B cell (primary cell): ENCODE measurements at regions of chr7 and their contacts with region 1.

Region 1: GRCh38 chr7:30322271-30323005 is 38.0 kb downstream of the ZNRF2 start:
- DNase-seq: peak; percentile 63
- ATAC-seq: peak; percentile 74
- H3K4me3 ChIP-seq: peak overlapping the region; percentile 11 to 51 (median 47)
- H3K4me3 Mint-ChIP-seq: peak overlapping the region; percentile 87
- H3K27ac ChIP-seq: peak overlapping the region; percentile 87 to 94
- H3K27ac Mint-ChIP-seq: peak overlapping the region; percentile 97
- H3K4me1 ChIP-seq: peaks cover 29 to 46% of the 10 kb centered on the region in 2 donors
- H3K4me1 Mint-ChIP-seq: peaks cover 79% of the 10 kb centered on the region
- H3K27me3 ChIP-seq: no peaks in the 10 kb centered on the region
- H3K27me3 Mint-ChIP-seq: no peaks in the 10 kb centered on the region
- CTCF ChIP-seq: no peak

Region 2: DNA sequence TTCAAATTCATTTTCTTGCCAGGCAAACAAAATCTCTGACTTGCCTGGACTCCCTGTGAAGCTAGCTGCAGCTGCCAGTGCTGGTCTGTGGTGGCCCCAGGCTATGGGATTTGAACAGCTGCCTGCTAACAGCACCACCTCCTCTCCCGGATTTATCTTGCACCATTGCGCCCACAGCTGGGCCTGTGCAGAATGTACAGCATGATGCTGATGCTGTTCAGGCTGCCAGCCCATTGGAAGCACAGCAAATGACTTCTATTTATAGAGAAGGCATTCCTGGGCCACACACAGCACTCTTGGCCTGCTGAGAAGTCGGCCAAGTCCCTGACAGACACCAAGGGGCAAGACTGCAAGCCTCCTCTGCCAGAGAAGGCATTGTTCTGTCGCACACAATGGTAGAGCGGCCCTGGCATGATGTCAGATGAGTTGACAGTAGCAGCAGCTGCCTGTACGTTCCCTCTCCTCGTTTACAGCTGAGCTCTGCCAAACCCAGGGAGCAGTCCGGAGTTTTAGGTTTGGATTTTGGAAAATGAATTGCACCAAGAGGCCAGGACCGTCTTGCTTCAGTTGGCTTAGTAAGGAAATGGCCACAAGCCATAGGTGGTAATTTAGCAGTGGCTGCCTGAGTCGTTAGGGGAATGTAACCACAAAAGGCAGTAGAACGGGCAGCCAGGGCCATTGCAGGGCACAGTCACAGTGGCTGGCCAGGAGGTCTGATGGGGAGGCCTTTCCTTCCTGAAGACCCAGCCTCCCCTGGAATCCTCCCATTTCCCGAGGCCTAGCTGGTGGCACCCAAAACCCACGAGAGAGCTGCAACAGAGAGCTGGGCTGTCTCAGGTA is 149.2 kb before region 1 on chr7:
- CTCF ChIA-PET with region 1: no interaction called
- POLR2A ChIA-PET with region 1: no interaction called
- intact Hi-C with region 1: no loop called
- DNase-seq: no peak
- ATAC-seq: no peak
- H3K4me3 ChIP-seq: no peak overlapping the region
- H3K4me3 Mint-ChIP-seq: no peak overlapping the region
- H3K27ac ChIP-seq: no peak overlapping the region
- H3K27ac Mint-ChIP-seq: no peak overlapping the region
- H3K4me1 ChIP-seq: peaks cover 17 to 22% of the 10 kb centered on the region in 2 donors
- H3K4me1 Mint-ChIP-seq: peaks cover 29% of the 10 kb centered on the region
- H3K27me3 ChIP-seq: no peaks in the 10 kb centered on the region
- H3K27me3 Mint-ChIP-seq: no peaks in the 10 kb centered on the region
- CTCF ChIP-seq: no peak

Region 3: GRCh38 chr7:30206491-30206890 is 115.9 kb before region 1 on chr7:
- CTCF ChIA-PET with region 1: no interaction called
- POLR2A ChIA-PET with region 1: no interaction called
- intact Hi-C with region 1: no loop called
- DNase-seq: no peak
- ATAC-seq: no peak
- H3K4me3 ChIP-seq: no peak overlapping the region
- H3K4me3 Mint-ChIP-seq: no peak overlapping the region
- H3K27ac ChIP-seq: no peak overlapping the region
- H3K27ac Mint-ChIP-seq: no peak overlapping the region
- H3K4me1 ChIP-seq: peaks cover 6 to 8% of the 10 kb centered on the region in 2 donors
- H3K4me1 Mint-ChIP-seq: peaks cover 10% of the 10 kb centered on the region
- H3K27me3 ChIP-seq: no peaks in the 10 kb centered on the region
- H3K27me3 Mint-ChIP-seq: no peaks in the 10 kb centered on the region
- CTCF ChIP-seq: no peak

Region 4: DNA sequence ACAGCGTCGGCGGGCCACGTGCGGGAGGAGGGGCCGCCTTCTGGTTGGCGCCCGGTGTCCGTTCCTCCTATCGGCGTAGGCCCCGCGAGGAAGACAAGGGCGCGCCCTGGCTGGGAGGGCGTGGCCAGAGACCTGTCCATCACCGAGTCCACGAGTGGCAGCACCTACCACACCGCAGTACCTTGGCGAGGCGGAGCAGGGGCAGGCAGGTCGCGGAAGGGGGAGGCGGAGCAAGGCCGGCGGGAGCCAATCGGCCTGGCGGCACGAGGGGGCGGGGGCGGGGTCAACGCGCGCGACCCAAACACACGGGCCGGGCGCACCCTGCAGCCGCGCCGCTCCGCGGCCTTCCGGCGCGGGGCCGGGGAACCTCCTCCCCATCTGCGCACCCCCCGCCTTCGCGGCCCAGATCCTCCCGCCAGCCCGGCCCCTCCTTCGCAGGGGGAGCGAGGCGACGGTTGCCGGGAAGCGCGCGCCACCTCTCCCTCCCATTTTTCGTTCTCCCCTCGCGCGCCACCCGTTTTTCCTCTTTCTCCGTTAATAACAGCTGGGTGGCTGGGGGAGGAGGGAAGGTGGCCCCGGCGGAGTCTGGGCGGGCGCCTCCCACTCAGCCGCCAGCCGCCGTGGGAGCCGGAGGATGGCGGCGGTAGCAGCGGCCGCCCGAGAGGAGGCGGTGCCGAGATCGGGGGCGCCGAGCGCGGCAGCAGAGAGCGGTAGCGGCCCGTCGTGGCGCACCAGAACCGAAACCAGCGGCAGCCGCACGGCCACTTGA is 38.0 kb before region 1 on chr7 and contains the start of gene ZNRF2:
- CTCF ChIA-PET with region 1: no interaction called
- POLR2A ChIA-PET with region 1: interaction called, 4 read pairs
- intact Hi-C with region 1: loop called (anchors 2 kb)
- DNase-seq: peak; percentile 99
- ATAC-seq: peak; percentile 80
- H3K4me3 ChIP-seq: peak within 1 kb of the TSS; percentile 46 to 91 (median 80)
- H3K4me3 Mint-ChIP-seq: peak within 1 kb of the TSS; percentile 88
- H3K27ac ChIP-seq: peak within 1 kb of the TSS; percentile 84 to 90
- H3K27ac Mint-ChIP-seq: peak within 1 kb of the TSS; percentile 96
- H3K4me1 ChIP-seq: peaks cover 19 to 30% of the 10 kb centered on the region in 2 donors
- H3K4me1 Mint-ChIP-seq: peaks cover 44% of the 10 kb centered on the region
- H3K27me3 ChIP-seq: no peaks in the 10 kb centered on the region
- H3K27me3 Mint-ChIP-seq: no peaks in the 10 kb centered on the region
- CTCF ChIP-seq: peak; percentile 41
- total RNA-seq, gene ZNRF2: 32.0 and 33.6 TPM in 2 replicates

Region 5: GRCh38 chr7:30308389-30308788 is 14.0 kb before region 1 on chr7:
- CTCF ChIA-PET with region 1: interaction called, 5 read pairs
- POLR2A ChIA-PET with region 1: interaction called, 3 read pairs
- intact Hi-C with region 1: loop called (anchors 2 kb)
- DNase-seq: no peak
- ATAC-seq: peak; percentile 49
- H3K4me3 ChIP-seq: no peak overlapping the region
- H3K4me3 Mint-ChIP-seq: no peak overlapping the region
- H3K27ac ChIP-seq: no peak overlapping the region
- H3K27ac Mint-ChIP-seq: no peak overlapping the region
- H3K4me1 ChIP-seq: peaks cover 25 to 46% of the 10 kb centered on the region in 2 donors
- H3K4me1 Mint-ChIP-seq: peaks cover 73% of the 10 kb centered on the region
- H3K27me3 ChIP-seq: no peaks in the 10 kb centered on the region
- H3K27me3 Mint-ChIP-seq: no peaks in the 10 kb centered on the region
- CTCF ChIP-seq: no peak

Region 6: GRCh38 chr7:30335763-30336487 is 13.5 kb after region 1 on chr7:
- CTCF ChIA-PET with region 1: interaction called, 6 read pairs
- POLR2A ChIA-PET with region 1: interaction called, 4 read pairs
- intact Hi-C with region 1: loop called (anchors 2 kb)
- DNase-seq: no peak
- ATAC-seq: no peak
- H3K4me3 ChIP-seq: no peak overlapping the region
- H3K4me3 Mint-ChIP-seq: no peak overlapping the region
- H3K27ac ChIP-seq: no peak overlapping the region
- H3K27ac Mint-ChIP-seq: no peak overlapping the region
- H3K4me1 ChIP-seq: peaks cover 6 to 22% of the 10 kb centered on the region in 2 donors
- H3K4me1 Mint-ChIP-seq: peaks cover 66% of the 10 kb centered on the region
- H3K27me3 ChIP-seq: no peaks in the 10 kb centered on the region
- H3K27me3 Mint-ChIP-seq: no peaks in the 10 kb centered on the region
- CTCF ChIP-seq: no peak

Region 7: DNA sequence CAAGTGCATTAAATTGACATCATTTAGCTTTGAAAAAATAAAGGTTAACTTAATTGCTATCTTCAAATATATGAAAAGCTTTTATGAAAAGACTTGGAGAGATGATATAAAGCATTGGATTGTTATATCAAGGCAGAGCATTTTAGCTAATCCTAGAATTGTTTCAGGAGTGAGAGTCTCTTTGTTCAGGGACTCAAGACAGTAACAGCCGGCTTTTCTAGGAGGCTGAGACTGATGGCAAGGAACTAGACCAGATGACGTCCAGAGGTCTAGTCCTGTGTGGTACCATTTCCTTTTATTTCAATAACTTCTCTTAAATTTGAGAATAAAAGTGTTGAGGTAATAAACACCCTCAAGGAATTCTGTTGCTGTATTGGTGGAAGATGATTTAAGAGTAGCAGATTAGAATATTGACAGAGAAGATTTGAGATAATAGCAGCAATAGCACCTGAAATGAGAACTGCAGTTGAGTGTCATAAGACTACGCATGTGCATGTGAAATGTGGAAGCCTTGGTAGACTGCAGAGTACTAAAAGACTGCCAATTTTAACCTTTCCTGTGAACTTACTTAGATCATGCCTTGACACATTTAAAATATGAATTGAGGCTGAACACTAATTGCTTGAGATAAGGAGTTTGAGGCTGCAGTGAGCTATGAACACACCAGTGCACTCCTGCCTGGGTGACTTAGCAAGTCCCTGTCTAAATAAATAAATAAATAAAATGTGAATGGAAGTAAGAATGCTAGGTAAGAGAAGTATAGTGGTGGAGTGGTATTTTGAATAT is 41.5 kb after region 1 on chr7:
- CTCF ChIA-PET with region 1: interaction called, 3 read pairs
- POLR2A ChIA-PET with region 1: no interaction called
- intact Hi-C with region 1: loop called (anchors 5 kb)
- DNase-seq: no peak
- ATAC-seq: no peak
- H3K4me3 ChIP-seq: no peak overlapping the region
- H3K4me3 Mint-ChIP-seq: peak overlapping the region; percentile 7
- H3K27ac ChIP-seq: no peak overlapping the region
- H3K27ac Mint-ChIP-seq: peak overlapping the region; percentile 28
- H3K4me1 ChIP-seq: peaks cover 4 to 9% of the 10 kb centered on the region in 2 donors
- H3K4me1 Mint-ChIP-seq: peaks cover 28% of the 10 kb centered on the region
- H3K27me3 ChIP-seq: no peaks in the 10 kb centered on the region
- H3K27me3 Mint-ChIP-seq: no peaks in the 10 kb centered on the region
- CTCF ChIP-seq: no peak